G401 (cell line): ENCODE measurements at regions of chr11 and their contacts with region 1.

Region 1: GRCh38 chr11:17730608-17731462 is 3.7 kb upstream of the KCNC1 start:
- DNase-seq: peak; percentile 99

Region 2: GRCh38 chr11:17683378-17684161 is 47.3 kb before region 1 on chr11:
- in situ Hi-C with region 1: no loop called
- DNase-seq: peak; percentile 18

Region 3: DNA sequence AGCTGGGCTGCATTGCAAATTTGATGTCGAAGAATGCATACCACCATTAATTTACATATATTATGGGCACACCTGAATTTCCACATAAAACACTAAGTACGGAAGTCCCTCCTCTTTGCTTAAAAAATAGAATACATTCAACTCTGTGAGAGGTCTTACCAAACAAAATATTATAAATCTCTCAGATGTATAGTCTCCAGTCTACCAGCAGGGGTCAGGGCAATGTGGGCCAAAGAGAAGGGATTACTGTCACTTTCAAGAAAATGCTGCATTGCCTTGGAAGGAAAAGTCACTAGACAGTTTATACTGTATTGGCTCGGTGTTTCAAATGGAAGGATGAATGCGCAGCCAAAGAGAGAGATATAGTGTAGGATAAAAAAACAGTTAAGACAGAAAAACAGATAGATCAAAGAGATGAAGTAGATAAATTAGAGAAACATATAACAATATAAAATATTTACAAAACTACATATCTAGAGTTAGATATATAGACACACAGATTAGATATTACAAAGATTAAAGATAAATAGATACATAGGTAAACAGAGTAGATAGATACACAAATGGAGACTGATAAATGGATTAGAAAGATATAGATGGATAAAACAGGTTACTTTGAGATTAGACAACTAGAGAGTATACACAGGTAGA is 261.1 kb after region 1 on chr11:
- in situ Hi-C with region 1: loop called (anchors 25 kb)
- DNase-seq: peak; percentile 73